Activated CD4-positive, alpha-beta T cell treated with anti-CD3 and anti-CD28 coated beads for 36 hours (primary cell): ENCODE measurements at regions of chr18 and their contacts with region 1.

Region 1: GRCh38 chr18:74652392-74652988 is 54.8 kb downstream of the ZNF407 start:
- DNase-seq: no peak
- ATAC-seq: no peak
- H3K4me3 Mint-ChIP-seq: no peak overlapping the region
- H3K27ac Mint-ChIP-seq: no peak overlapping the region
- H3K4me1 Mint-ChIP-seq: no peaks in the 10 kb centered on the region
- H3K27me3 Mint-ChIP-seq: no peaks in the 10 kb centered on the region

Region 2: DNA sequence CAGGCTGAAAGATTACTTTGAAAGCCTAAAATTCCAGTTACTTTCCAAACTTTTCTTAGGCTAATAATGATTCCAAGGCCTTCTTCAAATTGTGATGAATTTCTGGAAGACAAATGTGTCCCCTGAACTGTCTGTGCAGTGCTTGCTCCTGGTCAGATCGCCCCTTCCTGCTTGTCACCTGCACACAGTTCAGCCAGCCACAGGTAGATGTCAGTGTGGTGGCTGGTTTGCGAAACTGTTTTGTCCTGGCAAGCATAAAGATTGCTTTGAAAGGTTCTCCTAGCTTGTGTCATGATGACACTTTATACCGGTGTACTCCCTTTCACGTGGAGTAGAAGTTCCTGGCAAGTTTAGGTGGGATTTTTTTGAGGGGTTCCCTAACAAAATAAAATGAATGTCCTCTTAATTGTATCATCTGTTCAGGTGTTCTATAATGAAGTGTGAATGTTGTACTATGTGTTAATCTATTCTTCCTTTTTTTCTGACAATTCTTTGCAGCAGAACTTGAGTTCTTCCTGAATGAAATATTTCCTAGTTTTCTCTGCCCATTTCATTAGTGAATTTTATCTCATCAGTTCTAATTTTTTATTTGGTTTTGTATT is 244.0 kb after region 1 on chr18:
- CTCF ChIA-PET with region 1: no interaction called
- POLR2A ChIA-PET with region 1: no interaction called
- intact Hi-C with region 1: loop called in 1 of 2 experiments (anchors 5 kb)
- DNase-seq: peak; percentile 62
- ATAC-seq: peak; percentile 60
- H3K4me3 Mint-ChIP-seq: no peak overlapping the region
- H3K27ac Mint-ChIP-seq: no peak overlapping the region
- H3K4me1 Mint-ChIP-seq: peaks cover 3% of the 10 kb centered on the region
- H3K27me3 Mint-ChIP-seq: no peaks in the 10 kb centered on the region

Region 3: GRCh38 chr18:75125382-75126331 is 473.2 kb after region 1 on chr18:
- CTCF ChIA-PET with region 1: no interaction called
- POLR2A ChIA-PET with region 1: no interaction called
- intact Hi-C with region 1: loop called in 1 of 2 experiments (anchors 10 kb)
- DNase-seq: no peak
- ATAC-seq: no peak
- H3K4me3 Mint-ChIP-seq: no peak overlapping the region
- H3K27ac Mint-ChIP-seq: no peak overlapping the region
- H3K4me1 Mint-ChIP-seq: no peaks in the 10 kb centered on the region
- H3K27me3 Mint-ChIP-seq: peaks cover 3% of the 10 kb centered on the region

Region 4: DNA sequence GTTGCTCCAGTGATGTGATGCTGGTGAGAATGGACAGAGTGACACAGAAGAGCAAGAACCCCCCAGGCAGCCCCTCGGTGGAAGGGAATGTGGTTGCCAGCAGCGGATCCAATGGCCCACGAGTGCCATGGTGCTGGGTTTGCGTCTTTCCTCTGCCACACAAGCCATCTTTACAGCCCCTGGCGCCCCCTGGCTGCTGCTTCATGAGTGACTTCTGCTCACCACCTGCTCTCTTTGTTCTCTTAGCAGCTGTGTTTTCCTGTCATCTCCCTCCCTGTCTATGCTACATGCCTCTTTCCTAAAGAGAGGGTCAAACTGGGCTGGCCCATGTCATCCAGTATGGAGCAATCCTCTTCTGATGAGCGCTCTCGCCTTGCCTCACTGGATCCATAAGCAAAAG is 1075.0 kb after region 1 on chr18:
- CTCF ChIA-PET with region 1: no interaction called
- POLR2A ChIA-PET with region 1: no interaction called
- intact Hi-C with region 1: loop called (anchors 2 to 5 kb)
- DNase-seq: peak; percentile 73
- ATAC-seq: peak; percentile 33
- H3K4me3 Mint-ChIP-seq: no peak overlapping the region
- H3K27ac Mint-ChIP-seq: no peak overlapping the region
- H3K4me1 Mint-ChIP-seq: no peaks in the 10 kb centered on the region
- H3K27me3 Mint-ChIP-seq: peaks cover 36% of the 10 kb centered on the region